Sigmoid colon (tissue), 7 donors: ENCODE measurements at regions of chr1 and their contacts with region 1.

Region 1: DNA sequence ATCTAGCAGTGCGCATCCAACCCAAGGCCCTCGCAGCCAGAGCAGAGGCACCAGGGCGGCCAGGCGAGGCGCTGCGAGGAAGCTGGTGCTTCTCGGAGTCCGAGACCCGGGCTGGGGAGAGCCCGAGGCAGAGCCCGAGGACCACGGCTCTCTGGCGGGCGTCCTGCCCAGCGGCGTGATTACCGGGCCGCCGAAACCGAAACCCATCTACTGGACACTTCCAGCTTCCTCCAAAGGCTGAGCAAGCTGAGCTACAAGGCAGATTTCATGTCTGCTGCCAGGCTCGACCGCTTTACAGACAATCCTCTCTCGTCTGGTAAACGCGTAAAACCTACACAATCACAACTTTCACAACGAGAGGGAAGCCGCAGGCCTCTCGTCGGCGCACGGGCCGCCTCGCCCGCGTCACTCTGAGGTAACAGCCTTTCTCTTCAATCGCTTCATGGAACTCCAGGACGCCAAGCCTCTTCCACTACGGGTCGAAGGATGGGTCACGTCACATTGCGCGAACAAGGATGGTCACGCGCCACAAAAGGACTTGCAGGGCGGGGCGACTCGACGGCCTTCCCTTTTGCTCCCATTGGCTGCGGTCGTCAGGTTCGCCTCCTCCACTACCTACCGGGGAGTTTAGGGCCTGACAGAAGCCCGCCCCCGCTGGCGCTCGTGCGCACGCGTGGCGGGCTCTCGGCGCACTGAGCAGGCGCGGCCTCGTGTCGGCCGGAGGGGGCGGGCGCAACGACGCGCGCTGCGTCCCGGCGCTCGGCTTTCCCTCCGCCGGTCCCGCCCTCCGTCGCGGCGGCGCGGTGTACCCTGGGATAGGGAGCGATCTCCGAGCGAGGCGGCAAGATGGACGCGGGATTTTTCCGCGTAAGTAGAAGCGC is at the start of gene SRRM1:
- DNase-seq: peak; percentile 100
- H3K4me3 ChIP-seq: peak within 1 kb of the TSS; percentile 65 to 75 (median 72)
- H3K27ac ChIP-seq: peak within 1 kb of the TSS; percentile 97 to 100 (median 100)
- H3K4me1 ChIP-seq: peaks cover 0 to 32% (median 29%) of the 10 kb centered on the region in 4 donors
- H3K27me3 ChIP-seq: no peaks in the 10 kb centered on the region
- CTCF ChIP-seq: no peak
- EP300 ChIP-seq: peak in 1 of 4 donors; percentile 92
- POLR2A ChIP-seq: peak; percentile 100
- total RNA-seq, gene SRRM1: 81.5 to 171 (median 89.6) TPM

Region 2: GRCh38 chr1:24415334-24415909 is 227.3 kb before region 1 on chr1 and contains the start of gene NIPAL3:
- intact Hi-C with region 1: loop called (anchors 5 kb)
- DNase-seq: peak; percentile 99
- H3K4me3 ChIP-seq: peak within 1 kb of the TSS; percentile 45 to 65 (median 58)
- H3K27ac ChIP-seq: peak within 1 kb of the TSS; percentile 39 to 84 (median 64)
- H3K4me1 ChIP-seq: peaks cover 0 to 50% (median 27%) of the 10 kb centered on the region in 4 donors
- H3K27me3 ChIP-seq: no peaks in the 10 kb centered on the region
- CTCF ChIP-seq: peak; percentile 33 to 83 (median 72)
- EP300 ChIP-seq: no peak
- POLR2A ChIP-seq: peak in 1 of 2 donors; percentile 16
- total RNA-seq, gene NIPAL3: 23.7 to 53.2 (median 42.3) TPM

Region 3: DNA sequence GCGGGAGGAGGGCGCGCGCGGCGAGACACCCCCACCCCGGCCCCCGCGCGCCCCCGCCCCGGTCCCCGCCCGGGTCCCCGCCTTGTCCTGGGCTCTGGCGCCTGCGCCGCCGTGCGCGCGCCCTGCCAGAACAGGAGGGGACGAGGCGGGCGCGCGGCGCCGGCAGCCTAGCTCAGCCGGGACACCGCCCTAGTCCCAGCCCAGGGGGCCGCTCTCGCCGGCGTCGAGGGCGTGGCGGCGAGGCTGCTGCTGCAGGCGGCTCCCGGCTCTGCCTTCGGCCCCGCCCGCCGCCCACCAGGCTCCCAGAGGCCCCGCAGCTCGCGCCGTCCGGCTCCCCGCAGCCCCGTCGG is 140.0 kb before region 1 on chr1 and contains the start of gene RCAN3:
- intact Hi-C with region 1: loop called (anchors 5 kb)
- DNase-seq: peak; percentile 85
- H3K4me3 ChIP-seq: peak within 1 kb of the TSS; percentile 55 to 88 (median 74)
- H3K27ac ChIP-seq: peak within 1 kb of the TSS; percentile 77 to 86 (median 81)
- H3K4me1 ChIP-seq: peaks cover 0 to 12% (median 6%) of the 10 kb centered on the region in 4 donors
- H3K27me3 ChIP-seq: no peaks in the 10 kb centered on the region
- CTCF ChIP-seq: no peak
- EP300 ChIP-seq: no peak
- POLR2A ChIP-seq: no peak
- total RNA-seq, gene RCAN3: 4.1 to 19.1 (median 10.7) TPM

Region 4: GRCh38 chr1:24744911-24745710 is 102.4 kb after region 1 on chr1 and contains the start of gene CLIC4:
- intact Hi-C with region 1: loop called (anchors 5 kb)
- DNase-seq: peak; percentile 100
- H3K4me3 ChIP-seq: peak within 1 kb of the TSS; percentile 89 to 97 (median 94)
- H3K27ac ChIP-seq: peak within 1 kb of the TSS; percentile 95 to 100 (median 99)
- H3K4me1 ChIP-seq: peaks cover 0 to 49% (median 47%) of the 10 kb centered on the region in 4 donors
- H3K27me3 ChIP-seq: no peaks in the 10 kb centered on the region
- CTCF ChIP-seq: no peak
- EP300 ChIP-seq: peak in 2 of 4 donors; percentile 15 to 47
- POLR2A ChIP-seq: peak; percentile 97
- total RNA-seq, gene CLIC4: 334 to 443 (median 385) TPM

Region 5: DNA sequence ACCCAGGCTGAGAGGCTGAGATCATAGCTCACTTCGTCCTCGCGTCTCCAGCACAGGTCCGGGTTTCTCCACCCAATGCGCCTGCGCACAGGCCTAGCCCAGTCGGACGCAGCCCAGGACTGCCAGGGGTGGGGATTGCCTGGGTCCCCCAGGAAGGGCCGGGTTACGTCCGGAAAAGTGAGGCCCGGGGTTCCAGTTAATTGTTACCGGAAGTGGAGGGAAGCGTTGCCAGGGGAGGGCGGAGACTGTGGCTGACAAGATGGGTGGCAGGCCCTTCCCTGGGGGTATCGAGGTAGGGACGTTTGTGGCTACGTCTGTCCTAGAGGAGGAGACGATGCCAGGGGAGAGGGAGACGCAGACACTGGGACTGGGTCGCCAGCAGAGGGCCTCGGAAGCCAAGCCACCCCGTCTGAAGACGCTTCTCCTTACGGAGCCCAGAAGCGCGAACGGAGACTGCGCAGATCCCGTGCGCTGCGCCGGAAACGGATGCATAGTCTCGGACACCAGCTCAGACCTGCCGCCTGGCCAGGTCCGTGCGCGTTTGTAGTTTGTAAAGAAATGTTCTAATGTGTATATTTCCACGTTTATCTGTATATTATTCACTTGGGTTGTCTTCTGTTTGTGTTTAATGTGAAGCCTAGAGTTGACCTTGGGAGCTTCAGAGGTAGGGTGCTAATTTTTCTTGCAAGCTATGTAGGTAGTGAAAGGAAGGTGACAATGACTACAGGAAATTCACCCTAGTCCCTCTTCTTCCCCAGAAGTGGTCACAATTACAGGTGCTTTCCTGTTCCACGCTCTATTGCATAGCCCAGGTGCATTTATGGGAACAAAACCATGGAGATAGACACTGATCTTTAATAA is 597.2 kb after region 1 on chr1:
- intact Hi-C with region 1: loop called (anchors 10 kb)
- DNase-seq: peak; percentile 97
- H3K4me3 ChIP-seq: peak overlapping the region; percentile 24 to 54 (median 50)
- H3K27ac ChIP-seq: peak overlapping the region; percentile 90 to 92 (median 90)
- H3K4me1 ChIP-seq: peaks cover 0 to 47% (median 28%) of the 10 kb centered on the region in 4 donors
- H3K27me3 ChIP-seq: no peaks in the 10 kb centered on the region
- CTCF ChIP-seq: peak in 3 of 4 experiments; percentile 33 to 52 (median 49)
- EP300 ChIP-seq: peak in 1 of 4 donors; percentile 24
- POLR2A ChIP-seq: peak in 1 of 2 donors; percentile 7